MCF 10A (cell line): ENCODE measurements at regions of chr12 and their contacts with region 1.

Region 1: DNA sequence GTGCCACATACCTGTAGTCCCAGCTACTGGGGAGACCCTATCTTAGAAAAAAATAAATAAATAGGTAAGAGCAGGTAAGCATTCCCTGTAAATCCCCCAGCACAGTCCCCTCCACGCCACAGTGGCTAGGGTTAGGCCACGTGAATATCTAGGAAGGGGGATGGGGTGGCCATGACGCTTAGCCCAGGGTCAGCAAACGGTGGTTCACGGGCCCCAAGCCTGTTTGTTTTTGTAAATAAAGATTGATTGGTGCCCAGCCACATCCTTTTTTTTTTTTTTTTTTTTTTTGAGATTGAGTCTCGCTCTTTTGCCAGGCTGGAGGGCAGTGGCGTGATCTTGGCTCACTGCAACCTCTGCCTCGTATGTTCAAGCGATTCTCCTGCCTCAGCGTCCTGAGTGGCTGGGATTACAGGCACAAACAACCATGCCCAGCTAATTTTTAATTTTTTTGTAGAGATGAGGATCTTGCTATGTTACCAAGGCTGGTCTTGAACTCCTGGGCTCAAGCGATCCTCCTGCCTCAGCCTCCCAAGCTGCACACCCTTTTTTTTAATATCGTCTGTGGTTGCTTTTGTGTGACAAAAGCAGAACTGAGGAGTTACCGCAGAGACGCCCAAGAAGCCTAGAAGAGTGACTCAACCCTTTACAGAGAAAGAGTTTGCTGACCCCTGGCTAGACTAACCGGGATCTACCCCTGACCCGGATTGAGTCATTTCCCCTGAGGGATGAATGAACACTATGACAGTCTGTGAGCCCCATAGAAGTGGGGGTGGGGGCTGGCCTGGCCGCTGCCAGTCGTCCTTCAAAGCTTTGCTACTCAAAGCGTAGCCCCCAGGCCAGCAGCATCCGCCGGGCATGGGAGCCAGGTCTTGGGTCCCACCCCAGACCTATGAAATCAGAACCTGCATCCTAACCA is 113.7 kb upstream of the NCOR2 start:
- DNase-seq: peak; percentile 91
- H3K4me3 Mint-ChIP-seq: no peak overlapping the region
- H3K27ac Mint-ChIP-seq: peak overlapping the region; percentile 18
- H3K4me1 Mint-ChIP-seq: peaks cover 46% of the 10 kb centered on the region
- H3K27me3 Mint-ChIP-seq: no peaks in the 10 kb centered on the region
- CTCF ChIP-seq: peak; percentile 40

Region 2: DNA sequence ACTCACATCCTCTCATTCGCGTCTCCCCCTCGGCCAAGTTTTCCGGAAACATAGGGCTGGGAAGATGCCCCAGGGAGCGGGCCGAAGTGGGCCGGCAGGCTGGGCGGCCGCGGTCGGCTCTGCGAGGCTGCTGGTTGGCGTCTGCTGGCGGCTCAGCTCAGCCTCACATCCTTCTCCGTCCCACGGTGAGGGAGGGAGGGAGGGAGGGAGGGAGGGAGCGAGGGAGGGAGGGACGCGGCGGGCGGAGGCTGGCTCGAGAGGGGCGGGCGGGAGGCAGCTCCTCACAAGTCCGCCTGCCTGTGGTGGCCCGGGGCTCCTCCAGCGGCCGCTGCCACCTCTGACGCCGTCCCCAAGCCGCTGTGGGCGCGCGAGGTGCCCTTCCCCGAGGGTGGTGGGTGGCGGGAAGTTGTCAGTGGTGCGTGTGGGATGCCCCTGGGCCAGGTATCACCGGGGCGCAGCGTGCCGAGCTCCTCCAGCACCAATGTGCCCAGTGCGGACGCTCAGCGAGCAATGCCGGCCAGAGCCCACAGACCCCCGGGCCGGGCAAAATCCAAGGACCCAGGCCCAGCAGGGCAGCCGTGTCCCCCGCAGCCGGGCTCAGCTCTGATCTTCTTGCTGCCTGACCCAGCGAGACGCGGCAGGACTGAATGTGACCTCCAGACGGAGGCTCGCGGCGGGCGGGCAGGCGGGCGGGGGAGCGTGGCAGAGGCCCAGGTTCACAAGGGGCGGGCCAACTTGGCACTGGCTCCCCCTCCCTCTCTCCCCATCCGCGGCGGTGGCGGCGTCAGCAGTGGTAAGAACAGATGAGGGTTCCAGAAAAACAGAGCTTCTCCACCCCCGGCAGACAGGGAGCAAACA is 292.2 kb before region 1 on chr12:
- CTCF ChIA-PET with region 1: no interaction called
- POLR2A ChIA-PET with region 1: no interaction called
- intact Hi-C with region 1: loop called (anchors 10 kb)
- DNase-seq: peak; percentile 83
- H3K4me3 Mint-ChIP-seq: peak overlapping the region; percentile 81
- H3K27ac Mint-ChIP-seq: peak overlapping the region; percentile 69
- H3K4me1 Mint-ChIP-seq: peaks cover 26% of the 10 kb centered on the region
- H3K27me3 Mint-ChIP-seq: no peaks in the 10 kb centered on the region
- CTCF ChIP-seq: no peak

Region 3: DNA sequence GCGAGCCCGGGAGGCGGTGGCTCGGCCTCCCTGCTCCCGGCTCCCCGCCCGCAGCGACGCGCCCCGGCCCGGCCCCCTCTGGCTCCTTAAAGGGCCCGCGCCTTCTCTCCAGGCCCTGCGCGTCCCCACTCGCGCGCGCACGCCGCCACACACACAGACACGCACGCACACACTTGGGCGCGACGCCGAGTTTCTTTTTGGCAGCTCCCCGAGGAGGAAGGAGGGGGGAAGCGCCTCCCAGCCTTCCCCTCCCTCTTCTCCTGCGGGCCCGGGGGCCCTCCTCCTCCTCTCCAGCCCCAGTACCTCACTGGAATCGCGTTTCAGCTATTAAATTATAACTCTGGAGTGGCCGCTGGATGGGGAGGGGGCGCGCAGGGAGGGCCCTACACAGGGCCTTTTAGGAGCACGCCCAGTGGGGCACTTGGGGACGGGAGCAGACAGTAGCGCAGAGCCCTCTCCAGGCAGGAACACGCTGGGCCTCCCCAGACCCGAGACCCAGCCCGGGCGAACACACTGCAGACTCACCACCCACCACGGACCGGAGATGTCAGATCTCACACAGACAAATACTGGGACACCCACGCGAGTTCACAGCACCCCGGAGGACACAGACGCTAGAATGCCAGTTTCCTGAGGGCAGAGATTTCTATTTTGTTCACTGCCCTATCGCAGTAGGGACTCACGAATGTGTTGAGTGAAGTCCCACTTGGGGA is 113.3 kb before region 1 on chr12:
- CTCF ChIA-PET with region 1: no interaction called
- POLR2A ChIA-PET with region 1: interaction called, 5 read pairs
- intact Hi-C with region 1: loop called (anchors 1 kb)
- DNase-seq: peak; percentile 79
- H3K4me3 Mint-ChIP-seq: peak overlapping the region; percentile 72
- H3K27ac Mint-ChIP-seq: no peak overlapping the region
- H3K4me1 Mint-ChIP-seq: peaks cover 6% of the 10 kb centered on the region
- H3K27me3 Mint-ChIP-seq: no peaks in the 10 kb centered on the region
- CTCF ChIP-seq: no peak

Region 4: GRCh38 chr12:124636138-124636978 is 44.8 kb before region 1 on chr12:
- CTCF ChIA-PET with region 1: interaction called, 5 read pairs
- POLR2A ChIA-PET with region 1: interaction called, 33 read pairs
- intact Hi-C with region 1: loop called (anchors 5 kb)
- DNase-seq: peak; percentile 67
- H3K4me3 Mint-ChIP-seq: no peak overlapping the region
- H3K27ac Mint-ChIP-seq: peak overlapping the region; percentile 59
- H3K4me1 Mint-ChIP-seq: peaks cover 56% of the 10 kb centered on the region
- H3K27me3 Mint-ChIP-seq: no peaks in the 10 kb centered on the region
- CTCF ChIP-seq: no peak

Region 5: GRCh38 chr12:124694846-124695497 is 13.9 kb after region 1 on chr12:
- CTCF ChIA-PET with region 1: interaction called, 3 read pairs
- POLR2A ChIA-PET with region 1: interaction called, 16 read pairs
- intact Hi-C with region 1: no loop called
- DNase-seq: peak; percentile 77
- H3K4me3 Mint-ChIP-seq: peak overlapping the region; percentile 14
- H3K27ac Mint-ChIP-seq: no peak overlapping the region
- H3K4me1 Mint-ChIP-seq: peaks cover 19% of the 10 kb centered on the region
- H3K27me3 Mint-ChIP-seq: no peaks in the 10 kb centered on the region
- CTCF ChIP-seq: no peak

Region 6: DNA sequence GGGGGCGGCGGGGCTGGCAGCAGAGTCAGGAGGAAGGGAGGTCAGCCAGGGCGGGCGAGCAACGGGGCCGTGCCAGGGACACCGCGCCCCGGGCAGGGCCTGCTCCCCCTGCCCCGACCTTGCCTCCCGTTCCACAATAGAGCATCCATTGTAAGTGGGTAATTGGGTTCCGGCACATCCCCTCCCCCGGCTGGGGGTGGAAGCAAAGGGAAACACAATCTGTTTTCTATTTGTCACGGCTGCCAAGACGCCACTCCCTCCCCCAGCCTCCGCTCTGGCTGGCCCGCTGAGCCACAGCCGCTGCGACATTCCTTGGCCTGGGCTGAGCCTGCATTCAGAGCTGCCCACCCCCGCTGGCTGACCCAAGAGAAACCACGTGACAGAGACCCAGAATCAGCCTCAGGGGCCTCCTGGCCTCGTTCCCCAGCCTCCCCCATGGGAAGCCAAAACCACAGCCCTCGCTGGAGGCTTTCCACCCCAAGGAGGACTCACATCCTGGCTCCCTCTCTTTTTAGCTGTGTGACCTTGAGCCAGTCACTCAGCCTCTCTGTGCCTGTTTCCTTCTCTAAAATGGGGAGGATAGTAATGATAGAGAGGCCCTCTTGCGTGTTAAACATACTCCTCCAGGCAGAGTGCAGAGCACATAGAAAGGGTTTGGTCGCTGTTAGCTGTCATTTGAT is 64.9 kb after region 1 on chr12:
- CTCF ChIA-PET with region 1: no interaction called
- POLR2A ChIA-PET with region 1: interaction called, 8 read pairs
- intact Hi-C with region 1: loop called (anchors 5 kb)
- DNase-seq: peak; percentile 91
- H3K4me3 Mint-ChIP-seq: peak overlapping the region; percentile 53
- H3K27ac Mint-ChIP-seq: no peak overlapping the region
- H3K4me1 Mint-ChIP-seq: peaks cover 30% of the 10 kb centered on the region
- H3K27me3 Mint-ChIP-seq: no peaks in the 10 kb centered on the region
- CTCF ChIP-seq: no peak

Region 7: DNA sequence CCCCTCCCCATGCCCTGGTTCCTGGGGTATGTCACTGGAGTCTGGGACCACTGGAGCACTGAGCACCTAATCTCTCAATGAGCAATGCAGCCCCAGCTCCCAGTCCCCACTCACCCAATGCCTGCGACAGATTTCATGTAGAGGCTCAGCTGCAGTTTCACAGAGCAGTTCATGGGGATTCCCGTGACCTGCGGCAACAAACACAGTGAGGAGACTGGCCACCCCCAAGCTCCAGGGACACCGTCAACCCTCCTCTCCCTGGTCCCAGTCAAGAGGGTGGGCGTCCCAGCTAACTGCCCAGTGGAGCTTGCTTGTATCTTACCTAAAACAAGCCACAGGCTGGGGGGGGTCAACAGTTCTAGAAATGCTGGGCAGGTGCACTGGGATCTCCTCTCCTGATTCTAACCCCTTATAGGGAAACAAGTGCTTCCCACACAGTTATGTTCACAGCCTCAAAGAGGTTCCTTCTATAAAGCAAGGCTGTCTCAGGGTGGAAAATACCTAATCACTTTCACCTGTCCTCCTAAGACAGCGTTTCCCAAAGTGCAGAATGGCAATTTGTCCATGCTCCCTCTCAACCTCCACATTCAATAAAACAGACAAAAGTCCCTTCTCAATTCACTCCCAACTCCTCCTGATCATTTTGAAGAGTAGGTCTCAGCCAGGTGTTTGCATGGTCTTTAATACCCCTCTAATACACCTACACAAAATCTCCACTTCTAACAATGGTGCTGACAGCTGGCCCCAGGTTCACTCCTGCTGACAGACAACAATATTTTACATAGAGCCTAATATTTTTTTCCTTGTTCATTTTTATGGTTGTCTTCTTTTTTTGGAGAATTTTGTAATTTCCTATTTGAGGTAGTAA is 114.2 kb after region 1 on chr12:
- CTCF ChIA-PET with region 1: no interaction called
- POLR2A ChIA-PET with region 1: no interaction called
- intact Hi-C with region 1: no loop called
- DNase-seq: no peak
- H3K4me3 Mint-ChIP-seq: no peak overlapping the region
- H3K27ac Mint-ChIP-seq: peak overlapping the region; percentile 5
- H3K4me1 Mint-ChIP-seq: no peaks in the 10 kb centered on the region
- H3K27me3 Mint-ChIP-seq: no peaks in the 10 kb centered on the region
- CTCF ChIP-seq: no peak

Region 8: DNA sequence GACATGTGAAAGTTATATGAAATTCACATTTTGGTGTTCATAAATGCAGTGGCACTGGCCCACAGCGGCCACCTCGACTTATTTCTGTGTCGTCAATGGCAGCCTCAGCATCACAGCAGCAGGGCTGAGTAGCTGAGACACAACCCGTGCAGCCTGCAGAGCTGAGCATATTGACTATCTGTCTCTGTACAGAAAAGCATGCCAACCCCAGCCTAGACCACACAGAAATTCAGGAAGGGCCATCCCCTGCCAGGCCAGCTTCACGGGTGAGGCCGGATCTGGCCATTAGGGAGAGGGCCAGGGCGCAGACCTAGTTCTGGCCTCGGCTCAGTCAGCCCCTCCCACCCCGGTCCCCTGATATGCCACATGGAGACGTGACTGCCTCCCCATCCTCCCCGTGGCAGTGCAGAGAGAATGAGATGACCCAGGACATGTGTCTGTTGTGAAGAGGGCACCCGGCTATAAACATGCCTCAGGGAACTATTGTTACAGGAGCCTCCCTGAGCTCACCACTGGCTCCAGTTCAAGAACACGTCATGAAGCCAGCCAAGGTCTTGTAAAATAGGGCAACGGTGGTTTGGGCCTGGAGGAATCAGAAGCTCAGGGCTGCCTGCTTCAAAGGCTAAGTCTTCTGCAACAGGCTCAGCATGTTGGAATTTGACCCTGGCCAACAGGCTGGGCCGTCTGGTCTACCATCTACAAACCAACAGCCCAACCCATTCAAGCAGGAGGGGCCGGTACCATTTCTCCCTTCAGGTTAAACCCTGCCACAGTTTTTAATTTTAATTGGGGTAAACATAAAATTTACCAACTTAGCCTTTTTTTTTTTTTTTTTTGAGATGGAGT is 157.1 kb after region 1 on chr12:
- CTCF ChIA-PET with region 1: no interaction called
- POLR2A ChIA-PET with region 1: no interaction called
- intact Hi-C with region 1: no loop called
- DNase-seq: peak; percentile 99
- H3K4me3 Mint-ChIP-seq: no peak overlapping the region
- H3K27ac Mint-ChIP-seq: peak overlapping the region; percentile 35
- H3K4me1 Mint-ChIP-seq: peaks cover 21% of the 10 kb centered on the region
- H3K27me3 Mint-ChIP-seq: no peaks in the 10 kb centered on the region
- CTCF ChIP-seq: no peak